Activated CD4-positive, alpha-beta T cell treated with anti-CD3 and anti-CD28 coated beads for 36 hours (primary cell): ENCODE measurements at regions of chr6 and their contacts with region 1.

Region 1: GRCh38 chr6:13427801-13428582 is 59.4 kb downstream of the GFOD1 start:
- DNase-seq: peak; percentile 90
- ATAC-seq: peak; percentile 68
- H3K4me3 Mint-ChIP-seq: peak overlapping the region; percentile 58
- H3K27ac Mint-ChIP-seq: peak overlapping the region; percentile 95
- H3K4me1 Mint-ChIP-seq: peaks cover 76% of the 10 kb centered on the region
- H3K27me3 Mint-ChIP-seq: no peaks in the 10 kb centered on the region

Region 2: DNA sequence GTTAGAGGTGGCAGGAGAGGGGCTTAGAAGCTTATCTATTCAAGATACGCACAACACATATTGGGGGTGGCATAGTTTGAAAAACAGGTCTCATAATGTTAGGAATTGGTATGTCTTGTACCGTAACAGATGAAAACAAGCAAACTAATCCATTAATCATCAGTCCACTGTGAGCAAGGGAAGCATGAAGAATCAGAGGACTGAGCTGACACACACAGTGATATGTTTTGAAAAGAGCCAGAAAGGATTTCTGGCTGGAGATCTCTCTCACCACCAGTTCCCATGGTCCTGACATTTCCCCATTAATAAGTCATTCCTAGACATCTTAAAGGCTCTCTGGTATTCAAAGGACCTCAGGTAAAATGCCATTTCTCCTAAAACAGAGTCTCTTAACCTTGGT is 870.2 kb before region 1 on chr6:
- CTCF ChIA-PET with region 1: no interaction called
- POLR2A ChIA-PET with region 1: no interaction called
- intact Hi-C with region 1: no loop called
- DNase-seq: no peak
- ATAC-seq: no peak
- H3K4me3 Mint-ChIP-seq: no peak overlapping the region
- H3K27ac Mint-ChIP-seq: no peak overlapping the region
- H3K4me1 Mint-ChIP-seq: no peaks in the 10 kb centered on the region
- H3K27me3 Mint-ChIP-seq: peaks cover 2% of the 10 kb centered on the region

Region 3: DNA sequence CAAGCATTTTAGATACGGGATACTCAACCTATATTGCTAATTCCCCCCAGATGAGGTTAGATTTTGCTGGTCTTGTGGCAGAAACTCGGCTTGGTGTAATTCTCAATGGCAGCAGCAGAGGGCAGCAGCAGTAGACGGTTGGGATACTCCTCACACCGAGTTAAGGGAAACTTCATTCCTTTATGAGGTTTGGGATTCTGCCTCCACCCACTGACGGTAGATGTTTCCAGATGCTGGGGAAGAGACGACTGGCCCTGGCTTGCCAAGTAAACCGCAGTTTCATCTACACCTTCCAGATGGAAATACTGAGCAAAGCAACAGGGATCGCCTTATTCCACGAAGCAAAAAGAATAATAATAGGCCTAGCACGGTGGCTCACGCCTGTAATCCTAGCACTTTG is 91.4 kb before region 1 on chr6:
- CTCF ChIA-PET with region 1: interaction called, 4 read pairs
- POLR2A ChIA-PET with region 1: no interaction called
- intact Hi-C with region 1: loop called in 1 of 2 experiments (anchors 2 kb)
- DNase-seq: peak; percentile 87
- ATAC-seq: peak; percentile 69
- H3K4me3 Mint-ChIP-seq: no peak overlapping the region
- H3K27ac Mint-ChIP-seq: no peak overlapping the region
- H3K4me1 Mint-ChIP-seq: peaks cover 10% of the 10 kb centered on the region
- H3K27me3 Mint-ChIP-seq: no peaks in the 10 kb centered on the region

Region 4: GRCh38 chr6:13375360-13375878 is 52.6 kb before region 1 on chr6:
- CTCF ChIA-PET with region 1: interaction called, 4 read pairs
- POLR2A ChIA-PET with region 1: no interaction called
- intact Hi-C with region 1: loop called in 1 of 2 experiments (anchors 1 kb)
- DNase-seq: peak; percentile 73
- ATAC-seq: peak; percentile 92
- H3K4me3 Mint-ChIP-seq: no peak overlapping the region
- H3K27ac Mint-ChIP-seq: peak overlapping the region; percentile 51
- H3K4me1 Mint-ChIP-seq: peaks cover 19% of the 10 kb centered on the region
- H3K27me3 Mint-ChIP-seq: peaks cover 1% of the 10 kb centered on the region

Region 5: GRCh38 chr6:13454286-13455221 is 26.6 kb after region 1 on chr6:
- CTCF ChIA-PET with region 1: interaction called, 12 read pairs
- POLR2A ChIA-PET with region 1: interaction called, 10 read pairs
- intact Hi-C with region 1: loop called (anchors 1 kb)
- DNase-seq: peak; percentile 88
- ATAC-seq: peak; percentile 66
- H3K4me3 Mint-ChIP-seq: peak overlapping the region; percentile 36
- H3K27ac Mint-ChIP-seq: peak overlapping the region; percentile 95
- H3K4me1 Mint-ChIP-seq: peaks cover 63% of the 10 kb centered on the region
- H3K27me3 Mint-ChIP-seq: no peaks in the 10 kb centered on the region

Region 6: DNA sequence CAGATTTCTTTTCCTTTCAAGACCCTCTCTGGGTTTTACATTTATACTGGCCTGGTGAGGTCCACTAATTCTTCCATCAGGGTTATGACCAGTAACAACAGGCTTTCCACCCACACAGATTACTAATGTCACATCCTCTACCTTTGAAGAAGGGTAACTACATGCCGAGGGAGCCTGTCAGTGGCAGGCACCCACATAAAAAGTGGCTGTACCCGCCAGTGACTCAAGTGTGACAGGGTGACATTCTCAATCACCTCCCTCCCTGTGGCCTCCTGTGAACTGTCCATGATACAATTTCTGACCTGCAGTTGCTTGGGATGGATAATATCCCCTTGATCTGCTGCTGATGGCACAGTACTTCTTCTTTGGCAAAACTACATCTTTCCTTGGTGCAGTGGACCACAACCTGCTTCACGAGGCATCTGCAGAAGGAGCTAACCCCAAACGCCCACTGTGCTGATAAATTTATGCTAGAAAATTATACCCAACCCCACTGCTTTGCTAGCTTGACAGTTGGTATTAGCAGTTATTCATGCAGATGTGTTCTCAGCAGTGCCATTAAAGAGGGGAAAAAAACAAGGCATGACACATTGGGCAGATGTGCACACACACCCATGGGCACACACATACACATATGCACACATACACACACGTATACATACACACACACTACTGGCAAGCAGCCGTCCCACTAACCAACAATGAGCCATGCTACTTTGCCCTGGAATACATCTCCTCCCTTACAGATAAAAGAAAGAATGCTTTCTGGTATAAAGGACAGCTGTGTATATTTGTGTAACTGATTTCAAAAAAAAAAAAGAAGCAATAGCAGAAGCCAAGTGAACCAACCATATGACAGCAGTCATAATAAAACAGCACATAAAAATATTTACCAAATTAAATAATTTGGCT is 38.6 kb after region 1 on chr6:
- CTCF ChIA-PET with region 1: no interaction called
- POLR2A ChIA-PET with region 1: interaction called, 3 read pairs
- intact Hi-C with region 1: loop called (anchors 1 to 5 kb)
- DNase-seq: peak; percentile 78
- ATAC-seq: peak; percentile 91
- H3K4me3 Mint-ChIP-seq: peak overlapping the region; percentile 44
- H3K27ac Mint-ChIP-seq: peak overlapping the region; percentile 87
- H3K4me1 Mint-ChIP-seq: peaks cover 71% of the 10 kb centered on the region
- H3K27me3 Mint-ChIP-seq: no peaks in the 10 kb centered on the region